ENCODE measurements at regions of chr17 and their contacts with region 1.

Region 1: DNA sequence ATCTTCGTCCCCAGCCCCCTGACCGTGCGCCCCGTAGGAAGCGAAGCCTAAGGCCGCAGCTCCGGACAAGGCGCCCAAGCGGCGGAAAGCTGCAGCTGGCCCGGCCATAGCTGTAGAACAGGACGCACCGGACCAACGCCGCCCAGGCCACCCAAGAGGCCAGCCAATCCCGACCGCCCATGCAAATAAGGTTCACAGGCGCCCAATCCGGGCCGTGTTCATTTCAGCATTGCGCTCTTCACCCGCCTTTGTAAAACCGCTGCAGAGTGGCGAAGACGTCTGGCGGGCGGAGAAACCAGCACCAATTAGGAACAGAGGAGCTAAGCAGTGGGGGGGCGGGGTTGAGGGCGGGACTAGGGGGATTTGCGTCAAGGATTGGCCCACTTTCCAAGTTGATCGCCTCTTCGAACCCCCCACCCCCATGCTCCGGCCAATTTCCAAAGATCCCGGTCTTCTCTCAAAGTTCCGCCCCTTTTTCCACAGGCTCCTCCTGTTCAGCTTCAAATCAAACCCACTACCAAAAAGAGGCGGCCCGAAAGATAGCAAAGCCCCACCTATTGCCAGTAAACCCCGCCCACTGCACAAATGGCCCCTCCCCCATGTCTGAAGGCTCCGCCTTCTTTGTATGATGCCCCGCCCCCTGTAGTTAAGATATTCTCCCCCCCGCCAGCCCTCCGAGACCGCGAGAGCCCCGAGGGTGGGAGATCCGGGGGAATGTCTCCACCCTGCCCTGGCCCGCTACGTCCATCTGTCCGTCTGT is at the start of gene TMEM256:
- DNase-seq: peak; percentile 75 to 98 (median 85)
- ATAC-seq: peak; percentile 98
- H3K4me3 ChIP-seq: peak within 1 kb of the TSS; percentile 68
- H3K27ac ChIP-seq: peak within 1 kb of the TSS; percentile 78
- H3K4me1 ChIP-seq: peaks cover 11 to 25% of the 10 kb centered on the region in 2 experiments; a peak in 3 of 5 replicates
- H3K27me3 ChIP-seq: no peaks in the 10 kb centered on the region
- CTCF ChIP-seq: no peak
- EP300 ChIP-seq: no peak
- POLR2A ChIP-seq: peak; percentile 86
- RAD21 ChIP-seq: no peak
- polyA plus RNA-seq, gene TMEM256: 114 to 117 TPM

Region 2: GRCh38 chr17:7435221-7435675 is 31.1 kb after region 1 on chr17 and contains the start of gene TMEM102:
- CTCF ChIA-PET with region 1: no interaction called
- POLR2A ChIA-PET with region 1: no interaction called
- in situ Hi-C with region 1: no loop called
- intact Hi-C with region 1: loop called (anchors 5 kb)
- DNase-seq: peak; percentile 87 to 98 (median 90)
- ATAC-seq: peak; percentile 93
- H3K4me3 ChIP-seq: peak within 1 kb of the TSS; percentile 64
- H3K27ac ChIP-seq: peak within 1 kb of the TSS; percentile 75
- H3K4me1 ChIP-seq: peaks cover 9 to 52% of the 10 kb centered on the region in 2 experiments; a peak in 4 of 5 replicates
- H3K27me3 ChIP-seq: no peaks in the 10 kb centered on the region
- CTCF ChIP-seq: no peak
- EP300 ChIP-seq: no peak
- POLR2A ChIP-seq: peak; percentile 66
- RAD21 ChIP-seq: no peak
- polyA plus RNA-seq, gene TMEM102: 0.03 TPM in 1 of 2 experiments, not detected in the other